ENCODE measurements at regions of chr6 and their contacts with region 1.

Region 1: DNA sequence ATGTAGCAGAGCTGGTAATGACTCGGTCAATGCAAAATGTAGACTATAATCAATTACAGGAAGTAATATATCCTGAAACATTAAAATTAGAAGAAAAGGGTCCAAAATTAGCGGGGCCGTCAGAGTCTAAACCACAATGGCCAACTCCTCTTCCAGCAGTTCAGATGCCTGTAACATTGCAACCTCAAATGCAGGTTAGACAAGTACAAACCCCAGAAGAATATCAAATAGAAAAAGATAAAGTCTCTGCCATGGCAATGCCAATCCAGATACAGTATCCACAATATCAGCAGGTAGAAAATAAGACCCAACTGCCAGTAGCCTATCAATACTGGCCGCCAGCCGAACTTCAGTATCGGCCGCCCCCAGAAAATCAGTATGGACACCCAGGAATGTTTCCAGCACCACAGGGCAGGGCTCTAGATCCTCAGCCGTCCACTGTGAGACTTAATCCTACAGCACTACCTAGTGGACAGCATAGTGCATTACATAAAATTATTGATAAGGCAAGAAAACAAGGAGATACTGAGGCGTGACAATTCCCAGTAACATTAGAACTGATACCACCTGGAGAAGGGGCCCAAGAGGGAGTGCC is 158.4 kb downstream of the GPX5 start:
- DNase-seq: peak; percentile 5 to 7
- H3K4me3 ChIP-seq: no peak overlapping the region
- H3K27ac ChIP-seq: no peak overlapping the region
- H3K4me1 ChIP-seq: no peaks in the 10 kb centered on the region
- H3K27me3 ChIP-seq: no peaks in the 10 kb centered on the region
- CTCF ChIP-seq: peak in 4 of 6 experiments; percentile 48 to 56 (median 52)
- POLR2A ChIP-seq: no peak

Region 2: GRCh38 chr6:28291573-28291972 is 392.5 kb before region 1 on chr6:
- intact Hi-C with region 1: no loop called
- DNase-seq: no peak
- H3K4me3 ChIP-seq: no peak overlapping the region
- H3K27ac ChIP-seq: no peak overlapping the region
- H3K4me1 ChIP-seq: no peaks in the 10 kb centered on the region
- H3K27me3 ChIP-seq: no peaks in the 10 kb centered on the region
- CTCF ChIP-seq: no peak
- POLR2A ChIP-seq: no peak

Region 3: GRCh38 chr6:28794175-28795002 is 110.3 kb after region 1 on chr6:
- intact Hi-C with region 1: no loop called
- DNase-seq: no peak
- H3K4me3 ChIP-seq: no peak overlapping the region
- H3K27ac ChIP-seq: no peak overlapping the region
- H3K4me1 ChIP-seq: peaks cover 0 to 4% of the 10 kb centered on the region in 2 donors
- H3K27me3 ChIP-seq: peaks cover 22% of the 10 kb centered on the region
- CTCF ChIP-seq: no peak
- POLR2A ChIP-seq: no peak

Region 4: DNA sequence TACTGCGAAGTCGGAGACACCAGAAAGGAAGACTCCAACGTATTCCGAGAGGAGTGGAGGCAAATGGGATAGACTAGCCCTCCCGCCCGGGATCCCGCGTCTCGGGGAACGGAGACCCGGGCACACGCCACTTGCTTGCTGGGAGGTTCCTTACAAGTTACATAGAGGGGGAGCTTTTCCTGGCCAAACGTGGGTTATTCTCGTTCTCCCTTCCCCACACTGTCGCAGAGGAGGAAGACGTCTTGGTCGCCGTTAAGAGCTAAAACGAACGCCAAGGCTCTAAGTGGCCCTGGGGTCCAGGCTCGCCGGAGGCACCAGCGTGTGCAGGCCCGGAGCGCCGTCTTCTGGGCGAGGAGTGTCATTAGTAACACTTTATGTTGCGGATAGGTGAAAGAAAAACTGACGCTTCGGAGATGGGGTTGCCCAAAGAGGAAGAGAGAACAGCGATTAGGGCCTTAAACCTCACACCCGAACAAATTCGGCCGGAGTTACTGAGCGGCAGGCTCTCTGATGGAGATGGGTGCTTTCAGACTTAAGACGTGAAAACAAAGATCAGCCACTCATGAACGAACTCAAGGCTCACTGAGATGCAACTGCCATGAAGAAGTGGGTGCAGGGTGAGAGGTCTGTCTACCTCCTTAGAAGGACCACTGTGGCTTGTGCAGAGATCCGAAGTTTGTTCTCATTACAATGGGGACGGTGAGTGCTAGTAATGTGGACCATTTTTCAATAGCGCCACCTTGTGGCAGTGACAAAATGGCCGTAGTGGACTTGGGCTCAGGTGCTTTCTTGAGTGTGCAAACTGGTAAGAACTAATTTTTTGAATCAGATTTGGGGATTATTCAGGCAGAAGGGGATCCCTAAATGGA is 332.8 kb after region 1 on chr6:
- intact Hi-C with region 1: loop called (anchors 5 kb)
- DNase-seq: peak; percentile 83 to 88
- H3K4me3 ChIP-seq: peak overlapping the region in 2 of 3 donors; percentile 32 to 53
- H3K27ac ChIP-seq: no peak overlapping the region
- H3K4me1 ChIP-seq: peaks cover 3 to 7% of the 10 kb centered on the region in 2 donors
- H3K27me3 ChIP-seq: no peaks in the 10 kb centered on the region
- CTCF ChIP-seq: peak; percentile 55 to 81 (median 74)
- POLR2A ChIP-seq: no peak

Region 5: GRCh38 chr6:29589423-29590048 is 905.5 kb after region 1 on chr6:
- intact Hi-C with region 1: loop called (anchors 5 kb)
- DNase-seq: peak; percentile 17 to 29
- H3K4me3 ChIP-seq: no peak overlapping the region
- H3K27ac ChIP-seq: no peak overlapping the region
- H3K4me1 ChIP-seq: peaks cover 0 to 6% of the 10 kb centered on the region in 2 donors
- H3K27me3 ChIP-seq: no peaks in the 10 kb centered on the region
- CTCF ChIP-seq: peak; percentile 84 to 98 (median 88)
- POLR2A ChIP-seq: no peak